ENCODE measurements at regions of chr19 and their contacts with region 1.

Region 1: GRCh38 chr19:10095948-10096621 is 6.4 kb downstream of the ANGPTL6 start:
- DNase-seq: no peak
- H3K4me3 ChIP-seq: peak overlapping the region; percentile 59
- CTCF ChIP-seq: no peak

Region 2: DNA sequence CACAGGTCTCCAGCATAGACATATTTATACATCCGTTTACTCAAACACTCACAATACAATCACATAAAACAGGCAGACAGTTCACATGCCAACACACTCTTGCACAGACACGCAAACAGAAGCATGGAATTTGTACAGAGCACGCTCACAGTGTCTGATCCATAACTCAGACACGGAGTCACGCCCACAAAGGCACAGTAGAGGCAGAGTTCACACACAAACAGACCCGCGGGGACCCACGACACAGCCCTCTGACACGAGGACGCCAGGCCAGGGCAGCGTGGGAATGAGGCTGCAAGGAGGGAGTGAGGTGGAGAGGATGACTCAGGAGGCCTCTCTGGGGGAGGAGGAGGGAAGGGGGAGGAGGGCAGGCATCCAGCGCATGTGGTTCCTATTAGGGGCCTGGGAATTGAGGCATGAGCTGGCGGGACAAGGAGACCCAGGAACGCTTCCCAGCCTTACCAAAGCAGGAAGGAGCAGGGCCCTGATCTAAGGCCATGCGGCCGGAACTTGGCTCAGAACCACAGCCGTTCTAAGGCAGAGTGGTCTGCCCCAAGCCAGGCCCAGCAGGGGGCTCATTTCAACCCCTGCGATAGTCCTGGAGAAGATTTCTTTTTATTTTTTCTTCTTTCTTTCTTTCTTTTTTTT is 150.6 kb before region 1 on chr19:
- CTCF ChIA-PET with region 1: no interaction called
- POLR2A ChIA-PET with region 1: no interaction called
- DNase-seq: peak; percentile 98
- H3K4me3 ChIP-seq: peak overlapping the region; percentile 21; the same call in 1 of the 2 replicates
- CTCF ChIP-seq: peak; percentile 25

Region 3: DNA sequence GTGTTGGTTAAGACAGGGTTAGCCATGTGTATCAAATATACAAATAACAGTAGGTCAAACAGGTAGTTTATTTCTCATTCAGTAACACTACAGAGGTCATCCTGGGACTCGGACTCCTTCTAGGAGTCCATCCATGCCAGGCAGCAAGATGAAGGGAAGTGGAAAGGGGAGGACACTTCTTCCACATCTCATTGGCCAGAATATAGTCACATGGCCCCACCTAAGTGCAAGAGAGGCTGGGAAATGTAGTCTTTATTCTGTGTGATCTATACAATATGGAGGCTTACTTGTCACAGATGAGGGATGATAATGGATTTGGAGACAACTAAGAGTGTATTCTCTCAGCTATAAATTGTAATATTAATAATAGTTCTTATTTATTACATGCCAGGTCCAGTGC is 51.7 kb before region 1 on chr19:
- CTCF ChIA-PET with region 1: no interaction called
- POLR2A ChIA-PET with region 1: no interaction called
- DNase-seq: no peak
- H3K4me3 ChIP-seq: no peak overlapping the region
- CTCF ChIP-seq: no peak

Region 4: GRCh38 chr19:10106100-10106936 is 10.2 kb after region 1 on chr19 and contains the start of gene PPAN:
- CTCF ChIA-PET with region 1: interaction called, 13 read pairs
- POLR2A ChIA-PET with region 1: interaction called, 6 read pairs
- DNase-seq: peak; percentile 83
- H3K4me3 ChIP-seq: peak within 1 kb of the TSS; percentile 86
- CTCF ChIP-seq: no peak